PC-3 (cell line): ENCODE measurements at regions of chr1 and their contacts with region 1.

Region 1: DNA sequence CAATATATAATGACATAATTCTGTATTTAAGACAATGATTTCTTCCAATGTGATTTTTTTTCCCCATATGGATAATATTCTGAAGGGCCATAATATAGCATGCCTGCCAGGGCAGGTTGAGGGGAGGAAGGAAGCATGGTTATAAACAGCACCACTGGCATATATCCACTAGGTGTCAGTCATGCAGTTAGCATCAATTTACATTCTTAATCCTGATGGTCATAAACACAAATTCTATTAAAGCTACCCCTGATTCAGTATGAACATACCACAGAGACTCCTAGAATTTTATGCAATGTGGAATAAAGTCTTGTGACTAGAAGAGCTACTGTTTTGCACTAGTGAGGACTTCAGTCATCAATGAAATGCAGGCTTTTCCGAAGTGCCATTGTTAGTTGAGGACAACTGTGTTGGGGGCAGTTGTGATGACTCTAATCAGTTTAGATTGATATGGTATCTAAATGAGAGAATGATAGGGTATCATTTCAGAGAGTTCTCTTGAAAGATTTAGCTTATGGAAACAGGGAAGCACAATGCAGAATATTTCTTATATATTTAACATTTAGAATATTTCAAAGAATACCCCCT is 342.7 kb upstream of the NR5A2 start:
- DNase-seq: peak; percentile 80
- ATAC-seq: peak; percentile 84
- H3K4me3 ChIP-seq: no peak overlapping the region
- H3K27ac ChIP-seq: no peak overlapping the region
- H3K4me1 ChIP-seq: peaks cover 13% of the 10 kb centered on the region
- H3K27me3 ChIP-seq: no peaks in the 10 kb centered on the region
- CTCF ChIP-seq: peak; percentile 79

Region 2: GRCh38 chr1:199948587-199949280 is 264.0 kb after region 1 on chr1:
- CTCF ChIA-PET with region 1: no interaction called
- POLR2A ChIA-PET with region 1: no interaction called
- intact Hi-C with region 1: loop called (anchors 10 kb)
- DNase-seq: peak; percentile 64
- ATAC-seq: peak; percentile 18; the same call in 1 of the 2 replicates
- H3K4me3 ChIP-seq: no peak overlapping the region
- H3K27ac ChIP-seq: no peak overlapping the region
- H3K4me1 ChIP-seq: no peaks in the 10 kb centered on the region
- H3K27me3 ChIP-seq: no peaks in the 10 kb centered on the region
- CTCF ChIP-seq: no peak

Region 3: GRCh38 chr1:200029035-200029821 is 344.4 kb after region 1 on chr1:
- CTCF ChIA-PET with region 1: no interaction called
- POLR2A ChIA-PET with region 1: no interaction called
- intact Hi-C with region 1: loop called (anchors 5 kb)
- DNase-seq: peak; percentile 94
- ATAC-seq: peak; percentile 90
- H3K4me3 ChIP-seq: peak overlapping the region; percentile 65
- H3K27ac ChIP-seq: no peak overlapping the region
- H3K4me1 ChIP-seq: peaks cover 12% of the 10 kb centered on the region
- H3K27me3 ChIP-seq: peaks cover 51% of the 10 kb centered on the region
- CTCF ChIP-seq: no peak

Region 4: GRCh38 chr1:200279810-200280411 is 595.1 kb after region 1 on chr1:
- CTCF ChIA-PET with region 1: interaction called, 11 read pairs
- POLR2A ChIA-PET with region 1: no interaction called
- intact Hi-C with region 1: loop called (anchors 1 kb)
- DNase-seq: peak; percentile 99
- ATAC-seq: peak; percentile 88
- H3K4me3 ChIP-seq: no peak overlapping the region
- H3K27ac ChIP-seq: no peak overlapping the region
- H3K4me1 ChIP-seq: no peaks in the 10 kb centered on the region
- H3K27me3 ChIP-seq: no peaks in the 10 kb centered on the region
- CTCF ChIP-seq: peak; percentile 97

Region 5: DNA sequence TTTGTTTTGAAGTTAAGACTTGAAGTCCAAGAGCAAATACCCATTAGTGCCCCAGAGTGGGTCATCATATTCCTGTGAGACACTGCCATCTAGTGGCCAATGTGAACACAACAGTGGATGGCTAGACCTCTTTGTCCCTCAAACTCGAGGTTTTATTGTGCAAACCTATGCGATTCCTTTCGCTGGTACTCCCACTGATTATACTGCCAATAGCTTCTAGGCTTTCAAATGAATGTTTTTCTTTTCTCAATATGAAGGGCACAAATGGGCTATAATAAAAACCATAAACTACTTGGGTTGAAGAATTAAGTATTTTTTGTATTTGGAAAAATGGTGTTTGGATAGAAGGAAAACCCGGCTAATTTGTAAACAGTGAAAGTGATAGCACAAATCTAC is 825.4 kb after region 1 on chr1:
- CTCF ChIA-PET with region 1: interaction called, 5 read pairs
- POLR2A ChIA-PET with region 1: no interaction called
- intact Hi-C with region 1: loop called (anchors 1 kb)
- DNase-seq: peak; percentile 99
- ATAC-seq: peak; percentile 82
- H3K4me3 ChIP-seq: peak overlapping the region; percentile 55; the same call in 1 of the 2 replicates
- H3K27ac ChIP-seq: no peak overlapping the region
- H3K4me1 ChIP-seq: peaks cover 16% of the 10 kb centered on the region
- H3K27me3 ChIP-seq: no peaks in the 10 kb centered on the region
- CTCF ChIP-seq: peak; percentile 100